CD8-positive, alpha-beta memory T cell (primary cell): ENCODE measurements at regions of chr15 and their contacts with region 1.

Region 1: DNA sequence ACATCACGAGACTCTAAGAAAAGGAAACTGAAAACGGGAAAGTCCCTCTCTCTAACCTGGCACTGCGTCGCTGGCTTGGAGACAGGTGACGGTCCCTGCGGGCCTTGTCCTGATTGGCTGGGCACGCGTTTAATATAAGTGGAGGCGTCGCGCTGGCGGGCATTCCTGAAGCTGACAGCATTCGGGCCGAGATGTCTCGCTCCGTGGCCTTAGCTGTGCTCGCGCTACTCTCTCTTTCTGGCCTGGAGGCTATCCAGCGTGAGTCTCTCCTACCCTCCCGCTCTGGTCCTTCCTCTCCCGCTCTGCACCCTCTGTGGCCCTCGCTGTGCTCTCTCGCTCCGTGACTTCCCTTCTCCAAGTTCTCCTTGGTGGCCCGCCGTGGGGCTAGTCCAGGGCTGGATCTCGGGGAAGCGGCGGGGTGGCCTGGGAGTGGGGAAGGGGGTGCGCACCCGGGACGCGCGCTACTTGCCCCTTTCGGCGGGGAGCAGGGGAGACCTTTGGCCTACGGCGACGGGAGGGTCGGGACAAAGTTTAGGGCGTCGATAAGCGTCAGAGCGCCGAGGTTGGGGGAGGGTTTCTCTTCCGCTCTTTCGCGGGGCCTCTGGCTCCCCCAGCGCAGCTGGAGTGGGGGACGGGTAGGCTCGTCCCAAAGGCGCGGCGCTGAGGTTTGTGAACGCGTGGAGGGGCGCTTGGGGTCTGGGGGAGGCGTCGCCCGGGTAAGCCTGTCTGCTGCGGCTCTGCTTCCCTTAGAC is at the start of gene B2M:
- DNase-seq: peak; percentile 90 to 99 (median 96)
- H3K4me3 ChIP-seq: peak within 1 kb of the TSS; percentile 79
- H3K4me3 Mint-ChIP-seq: peak within 1 kb of the TSS; percentile 96 to 100 (median 100)
- H3K27ac ChIP-seq: peak within 1 kb of the TSS; percentile 100
- H3K27ac Mint-ChIP-seq: peak within 1 kb of the TSS; percentile 99 to 100 (median 100)
- H3K4me1 ChIP-seq: peaks cover 48% of the 10 kb centered on the region
- H3K4me1 Mint-ChIP-seq: peaks cover 41 to 54% (median 51%) of the 10 kb centered on the region in 3 donors
- H3K27me3 ChIP-seq: no peaks in the 10 kb centered on the region
- H3K27me3 Mint-ChIP-seq: peaks cover 0 to 20% of the 10 kb centered on the region in 2 donors
- total RNA-seq, gene B2M: 4,597 to 4,837 TPM

Region 2: DNA sequence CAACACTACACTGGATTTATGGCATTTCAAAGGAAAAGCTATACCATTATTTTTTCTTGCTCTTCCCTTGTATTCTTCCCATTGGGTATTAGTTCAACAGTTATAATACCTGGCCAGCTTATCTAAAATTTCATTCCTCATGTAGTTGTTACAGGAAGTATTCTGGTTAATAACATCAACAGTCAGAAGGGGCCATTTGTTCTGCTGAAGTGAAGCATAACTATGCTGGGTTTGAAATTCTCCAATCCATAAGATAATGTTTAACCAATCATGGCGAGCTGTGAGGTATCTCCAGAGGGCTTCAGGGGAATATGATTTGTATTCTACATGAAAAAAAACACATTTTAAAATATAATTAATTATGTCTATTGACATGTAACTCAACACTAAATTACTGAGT is 91.5 kb before region 1 on chr15:
- CTCF ChIA-PET with region 1: no interaction called
- POLR2A ChIA-PET with region 1: no interaction called
- DNase-seq: no peak
- H3K4me3 ChIP-seq: no peak overlapping the region
- H3K4me3 Mint-ChIP-seq: no peak overlapping the region
- H3K27ac ChIP-seq: no peak overlapping the region
- H3K27ac Mint-ChIP-seq: peak overlapping the region in 1 of 8 donors; percentile 29
- H3K4me1 ChIP-seq: no peaks in the 10 kb centered on the region
- H3K4me1 Mint-ChIP-seq: peaks cover 0 to 8% (median 5%) of the 10 kb centered on the region in 3 donors
- H3K27me3 ChIP-seq: no peaks in the 10 kb centered on the region
- H3K27me3 Mint-ChIP-seq: no peaks in the 10 kb centered on the region

Region 3: DNA sequence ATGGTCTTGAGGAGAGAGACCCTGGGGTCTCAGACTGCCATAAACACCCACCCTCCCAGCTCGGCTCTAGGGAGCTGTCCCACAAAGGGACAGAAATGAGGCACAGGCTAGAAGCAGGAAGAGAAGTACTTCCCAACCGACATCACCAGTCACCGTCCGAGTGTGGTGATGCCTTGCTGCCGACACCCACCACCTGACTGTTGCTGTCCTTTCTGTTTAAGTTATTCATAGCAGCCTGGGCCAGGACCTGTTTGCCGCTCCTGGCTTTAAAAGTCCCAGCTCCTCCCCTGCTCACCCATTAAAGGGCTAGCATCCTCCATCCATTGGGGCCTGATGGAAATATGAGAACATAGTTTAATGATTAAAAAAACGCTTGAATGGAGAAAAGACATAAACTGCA is 34.9 kb before region 1 on chr15:
- CTCF ChIA-PET with region 1: interaction called, 478 read pairs
- POLR2A ChIA-PET with region 1: interaction called, 604 read pairs
- DNase-seq: no peak
- H3K4me3 ChIP-seq: peak overlapping the region; percentile 48
- H3K4me3 Mint-ChIP-seq: peak overlapping the region; percentile 65 to 97 (median 89)
- H3K27ac ChIP-seq: peak overlapping the region; percentile 15
- H3K27ac Mint-ChIP-seq: peak overlapping the region; percentile 92 to 98 (median 96)
- H3K4me1 ChIP-seq: peaks cover 96% of the 10 kb centered on the region
- H3K4me1 Mint-ChIP-seq: peaks cover 82 to 95% (median 93%) of the 10 kb centered on the region in 3 donors
- H3K27me3 ChIP-seq: no peaks in the 10 kb centered on the region
- H3K27me3 Mint-ChIP-seq: no peaks in the 10 kb centered on the region

Region 4: GRCh38 chr15:44682211-44682610 is 29.3 kb before region 1 on chr15:
- CTCF ChIA-PET with region 1: interaction called, 43 read pairs
- POLR2A ChIA-PET with region 1: interaction called, 48 read pairs
- DNase-seq: no peak
- H3K4me3 ChIP-seq: peak overlapping the region; percentile 3
- H3K4me3 Mint-ChIP-seq: peak overlapping the region in 6 of 7 donors; percentile 62 to 75 (median 72)
- H3K27ac ChIP-seq: peak overlapping the region; percentile 70
- H3K27ac Mint-ChIP-seq: peak overlapping the region; percentile 84 to 97 (median 90)
- H3K4me1 ChIP-seq: peaks cover 72% of the 10 kb centered on the region
- H3K4me1 Mint-ChIP-seq: peaks cover 88 to 97% (median 96%) of the 10 kb centered on the region in 3 donors
- H3K27me3 ChIP-seq: no peaks in the 10 kb centered on the region
- H3K27me3 Mint-ChIP-seq: peaks cover 0 to 2% of the 10 kb centered on the region in 2 donors

Region 5: GRCh38 chr15:44692659-44693058 is 18.9 kb before region 1 on chr15:
- CTCF ChIA-PET with region 1: interaction called, 26 read pairs
- POLR2A ChIA-PET with region 1: interaction called, 17 read pairs
- DNase-seq: no peak
- H3K4me3 ChIP-seq: no peak overlapping the region
- H3K4me3 Mint-ChIP-seq: no peak overlapping the region
- H3K27ac ChIP-seq: no peak overlapping the region
- H3K27ac Mint-ChIP-seq: peak overlapping the region in 4 of 8 donors; percentile 17 to 81 (median 32)
- H3K4me1 ChIP-seq: peaks cover 9% of the 10 kb centered on the region
- H3K4me1 Mint-ChIP-seq: peaks cover 34 to 66% (median 55%) of the 10 kb centered on the region in 3 donors
- H3K27me3 ChIP-seq: no peaks in the 10 kb centered on the region
- H3K27me3 Mint-ChIP-seq: no peaks in the 10 kb centered on the region

Region 6: DNA sequence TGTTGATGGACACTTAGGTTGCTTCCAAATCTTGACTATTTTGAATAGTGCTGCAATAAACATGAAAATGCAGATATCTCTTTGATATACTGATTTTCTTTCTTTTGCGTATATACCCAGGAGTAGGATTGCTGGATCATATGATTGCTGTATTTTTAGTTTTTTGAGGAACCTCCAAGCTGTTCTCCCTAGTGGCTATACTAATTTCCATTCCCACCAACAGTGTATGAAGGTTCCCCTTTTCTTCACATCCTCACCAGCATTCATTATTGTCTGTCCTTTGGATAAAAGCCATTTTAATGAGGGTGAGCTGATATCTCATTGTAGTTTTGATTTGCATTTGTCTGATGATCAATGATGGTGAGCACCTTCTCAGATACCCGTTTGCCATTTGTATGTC is 12.9 kb before region 1 on chr15:
- CTCF ChIA-PET with region 1: interaction called, 7 read pairs
- POLR2A ChIA-PET with region 1: interaction called, 10 read pairs
- DNase-seq: no peak
- H3K4me3 ChIP-seq: no peak overlapping the region
- H3K4me3 Mint-ChIP-seq: no peak overlapping the region
- H3K27ac ChIP-seq: no peak overlapping the region
- H3K27ac Mint-ChIP-seq: peak overlapping the region in 2 of 8 donors; percentile 2 to 14
- H3K4me1 ChIP-seq: no peaks in the 10 kb centered on the region
- H3K4me1 Mint-ChIP-seq: peaks cover 34 to 44% (median 38%) of the 10 kb centered on the region in 3 donors
- H3K27me3 ChIP-seq: no peaks in the 10 kb centered on the region
- H3K27me3 Mint-ChIP-seq: no peaks in the 10 kb centered on the region

Region 7: GRCh38 chr15:44728576-44729407 is 17.3 kb after region 1 on chr15:
- CTCF ChIA-PET with region 1: interaction called, 156 read pairs
- POLR2A ChIA-PET with region 1: interaction called, 728 read pairs
- DNase-seq: peak; percentile 86 to 97 (median 97)
- H3K4me3 ChIP-seq: peak overlapping the region; percentile 84
- H3K4me3 Mint-ChIP-seq: peak overlapping the region; percentile 90 to 100 (median 99)
- H3K27ac ChIP-seq: peak overlapping the region; percentile 88
- H3K27ac Mint-ChIP-seq: peak overlapping the region; percentile 96 to 100 (median 99)
- H3K4me1 ChIP-seq: peaks cover 74% of the 10 kb centered on the region
- H3K4me1 Mint-ChIP-seq: peaks cover 70 to 88% (median 86%) of the 10 kb centered on the region in 3 donors
- H3K27me3 ChIP-seq: no peaks in the 10 kb centered on the region
- H3K27me3 Mint-ChIP-seq: peaks cover 0 to 1% of the 10 kb centered on the region in 2 donors

Region 8: DNA sequence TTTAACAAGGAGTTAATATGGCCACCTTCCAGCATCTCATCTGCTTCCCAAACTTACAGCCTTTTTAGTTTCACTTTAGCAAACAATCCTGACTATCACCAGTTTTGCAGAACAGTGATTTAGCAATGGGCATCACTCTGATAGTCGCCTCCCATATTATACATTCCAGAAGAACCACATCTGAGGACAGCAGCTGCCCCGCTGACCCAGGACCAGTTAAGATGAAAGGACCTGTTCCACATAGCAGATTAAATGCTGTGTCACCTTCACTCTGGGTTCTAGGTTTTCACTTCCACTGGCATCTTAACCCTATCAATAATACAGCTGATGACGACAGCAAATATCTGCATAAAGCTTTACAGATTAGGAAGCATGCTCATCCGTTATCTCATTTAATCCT is 124.6 kb after region 1 on chr15:
- CTCF ChIA-PET with region 1: no interaction called
- POLR2A ChIA-PET with region 1: no interaction called
- DNase-seq: no peak
- H3K4me3 ChIP-seq: no peak overlapping the region
- H3K4me3 Mint-ChIP-seq: no peak overlapping the region
- H3K27ac ChIP-seq: no peak overlapping the region
- H3K27ac Mint-ChIP-seq: peak overlapping the region in 1 of 8 donors; percentile 54
- H3K4me1 ChIP-seq: no peaks in the 10 kb centered on the region
- H3K4me1 Mint-ChIP-seq: peaks cover 1 to 5% (median 4%) of the 10 kb centered on the region in 3 donors
- H3K27me3 ChIP-seq: no peaks in the 10 kb centered on the region
- H3K27me3 Mint-ChIP-seq: no peaks in the 10 kb centered on the region